ENCODE measurements at regions of chr4 and their contacts with region 1.

Region 1: GRCh38 chr4:145234091-145234706 is 53.8 kb upstream of the OTUD4 start:
- DNase-seq: no peak
- ATAC-seq: peak; percentile 68 to 71
- H3K4me3 ChIP-seq: no peak overlapping the region
- H3K27ac ChIP-seq: no peak overlapping the region
- H3K4me1 ChIP-seq: no peaks in the 10 kb centered on the region
- H3K27me3 ChIP-seq: no peaks in the 10 kb centered on the region
- CTCF ChIP-seq: peak; percentile 71

Region 2: DNA sequence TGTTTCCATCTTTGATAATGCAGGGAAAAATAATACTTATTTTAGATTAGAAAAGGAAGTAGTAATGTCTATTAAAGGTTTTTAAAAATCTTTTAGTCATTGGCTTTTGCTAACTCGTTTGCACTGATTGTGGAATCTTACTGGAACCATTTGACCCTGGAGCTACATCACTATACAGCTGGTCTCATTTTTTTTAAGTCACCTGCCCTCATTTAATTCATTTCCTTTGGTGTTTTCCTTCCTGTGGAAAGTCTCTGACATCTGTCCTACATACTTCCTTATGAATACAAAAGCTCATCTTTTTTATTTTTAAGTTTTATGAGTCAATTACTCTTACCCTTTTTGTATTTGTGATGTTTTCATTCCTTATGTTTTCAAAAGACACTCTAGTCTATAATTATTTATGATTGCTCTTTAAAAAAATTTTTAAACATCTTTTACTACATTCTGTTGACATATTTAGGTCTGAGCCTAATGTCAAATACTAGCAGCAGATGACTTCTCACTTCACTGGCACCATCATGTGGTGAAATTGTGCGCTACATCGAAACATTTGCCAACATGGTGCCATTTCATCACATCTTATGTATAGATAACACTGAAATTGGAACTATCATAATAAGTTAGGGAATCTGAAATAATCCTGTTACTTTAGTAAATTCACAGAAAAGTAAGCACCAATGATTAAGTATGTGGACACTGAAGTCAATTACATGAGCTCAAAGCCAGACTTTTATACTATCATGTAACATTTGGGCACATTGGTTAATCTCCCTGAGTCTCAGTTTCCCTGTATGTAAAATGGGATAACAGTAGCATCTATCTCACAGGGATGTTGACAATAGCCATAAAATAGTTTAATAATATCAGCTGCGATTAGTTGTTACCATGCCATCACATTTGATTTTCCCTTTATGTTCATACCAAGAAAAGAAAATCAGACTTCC is 375.6 kb after region 1 on chr4:
- intact Hi-C with region 1: loop called (anchors 10 kb)
- DNase-seq: no peak
- ATAC-seq: peak in 1 of 2 donors; percentile 67
- H3K4me3 ChIP-seq: no peak overlapping the region
- H3K27ac ChIP-seq: no peak overlapping the region
- H3K4me1 ChIP-seq: no peaks in the 10 kb centered on the region
- H3K27me3 ChIP-seq: no peaks in the 10 kb centered on the region
- CTCF ChIP-seq: peak; percentile 72